ENCODE measurements at regions of chr11 and their contacts with region 1.

Region 1: DNA sequence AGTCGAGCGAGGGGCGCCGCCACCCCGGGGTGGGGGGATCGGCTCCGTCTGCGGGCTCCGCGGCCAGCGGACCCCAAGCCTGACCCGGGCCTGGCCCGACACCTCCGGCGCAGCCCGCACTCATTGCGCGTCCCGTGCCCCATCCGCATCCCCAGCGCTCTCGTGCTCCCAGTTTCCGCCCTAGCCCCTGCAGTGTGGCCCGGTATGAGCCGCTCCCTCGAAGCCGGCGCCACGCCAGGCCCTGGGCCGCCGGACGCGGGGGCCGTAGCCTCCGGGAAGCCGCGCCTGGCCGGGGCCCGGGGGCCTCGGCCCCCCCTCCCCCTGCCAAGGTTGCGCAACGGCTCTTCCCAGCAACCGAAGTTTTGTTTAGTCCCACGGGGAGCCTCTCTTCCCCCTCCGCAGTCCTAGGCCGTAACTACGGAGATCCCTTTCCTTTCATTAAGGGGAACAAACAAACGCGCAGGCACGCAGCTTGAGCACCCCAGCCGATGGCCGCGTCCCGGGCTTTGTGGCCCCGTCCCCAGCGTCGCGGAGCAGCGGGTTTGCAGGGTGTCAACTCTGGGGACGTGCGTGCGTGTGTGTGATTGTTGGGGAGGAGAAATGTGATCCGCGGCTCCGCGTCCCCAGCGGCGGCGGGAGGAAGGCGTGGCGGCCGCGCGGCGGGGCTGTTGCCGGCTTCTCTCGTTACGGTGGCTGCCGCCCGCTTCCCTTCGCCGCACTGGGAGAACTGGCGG is 883 bp downstream of the HIPK3 start:
- DNase-seq: peak; percentile 92 to 96
- ATAC-seq: peak; percentile 94
- H3K4me3 ChIP-seq: peak overlapping the region; percentile 95 to 96
- H3K27ac ChIP-seq: peak overlapping the region; percentile 99 to 100
- H3K4me1 ChIP-seq: peaks cover 2 to 3% of the 10 kb centered on the region in 2 donors
- H3K27me3 ChIP-seq: no peaks in the 10 kb centered on the region

Region 2: DNA sequence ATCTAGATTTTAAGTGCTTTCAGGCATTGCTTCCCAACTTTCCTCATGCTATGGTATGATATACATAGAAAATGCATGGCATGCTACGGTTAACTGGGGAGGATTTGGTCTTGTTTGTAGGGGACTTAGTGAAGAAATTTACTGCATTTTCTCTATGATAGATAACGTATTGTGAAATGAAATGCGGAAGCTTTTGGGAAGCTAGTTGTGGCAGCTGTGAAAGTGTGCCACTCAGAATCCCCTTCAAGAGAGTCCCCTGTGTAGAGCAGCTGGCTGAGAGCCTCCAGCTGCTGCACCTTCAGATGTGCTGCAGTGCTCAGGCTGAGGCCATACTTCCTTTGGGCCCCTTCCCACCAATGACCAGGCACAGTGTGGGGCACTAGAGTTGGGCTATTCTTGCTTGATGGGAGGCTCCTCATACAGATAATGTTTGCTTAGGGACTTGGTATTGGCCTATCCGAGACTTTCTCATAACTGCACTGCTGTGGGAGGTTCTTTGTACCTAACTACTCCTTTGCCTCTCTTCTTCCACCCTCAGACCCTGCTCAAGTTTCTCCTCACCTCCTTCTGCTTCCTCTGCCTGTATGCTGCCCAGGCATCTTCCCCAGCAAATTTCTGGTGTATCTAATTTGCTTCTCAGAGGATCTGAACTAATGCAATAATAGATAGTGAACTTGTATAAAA is 66.4 kb after region 1 on chr11:
- intact Hi-C with region 1: loop called in 1 of 2 experiments (anchors 5 kb)
- DNase-seq: no peak
- ATAC-seq: no peak
- H3K4me3 ChIP-seq: no peak overlapping the region
- H3K27ac ChIP-seq: no peak overlapping the region
- H3K4me1 ChIP-seq: peaks cover 5 to 12% of the 10 kb centered on the region in 2 donors
- H3K27me3 ChIP-seq: no peaks in the 10 kb centered on the region

Region 3: DNA sequence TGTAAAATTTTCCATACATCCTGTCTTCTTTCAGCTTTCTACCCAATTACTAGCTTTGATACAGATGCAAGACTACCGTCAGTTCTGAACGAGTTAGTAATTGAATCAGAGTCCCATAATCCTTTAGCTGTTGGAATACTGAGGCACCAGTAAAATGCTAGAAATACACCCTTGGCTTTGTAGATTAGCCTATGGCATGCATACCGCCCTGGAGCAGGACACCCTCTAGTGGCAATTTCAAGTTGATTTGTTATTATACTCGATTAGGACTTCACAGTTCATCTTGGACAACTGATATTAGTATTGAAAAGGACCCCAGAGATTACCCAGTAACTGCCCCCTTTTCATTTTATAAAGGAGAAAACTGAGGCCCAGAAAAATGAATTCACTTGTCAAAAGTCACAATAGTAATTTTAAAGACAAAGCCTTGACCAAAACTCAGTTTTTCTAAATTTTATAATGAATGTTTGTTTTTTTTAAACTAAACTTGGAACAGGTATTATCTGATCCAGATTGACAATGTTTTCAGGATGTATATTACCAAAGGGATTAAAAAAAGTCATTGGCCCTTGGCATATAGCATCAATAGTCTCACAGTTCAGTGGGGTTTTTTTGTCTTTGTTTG is 71.8 kb after region 1 on chr11:
- intact Hi-C with region 1: loop called in 1 of 2 experiments (anchors 5 kb)
- DNase-seq: no peak
- ATAC-seq: peak; percentile 65
- H3K4me3 ChIP-seq: no peak overlapping the region
- H3K27ac ChIP-seq: no peak overlapping the region
- H3K4me1 ChIP-seq: peaks cover 0 to 9% of the 10 kb centered on the region in 2 donors
- H3K27me3 ChIP-seq: no peaks in the 10 kb centered on the region

Region 4: DNA sequence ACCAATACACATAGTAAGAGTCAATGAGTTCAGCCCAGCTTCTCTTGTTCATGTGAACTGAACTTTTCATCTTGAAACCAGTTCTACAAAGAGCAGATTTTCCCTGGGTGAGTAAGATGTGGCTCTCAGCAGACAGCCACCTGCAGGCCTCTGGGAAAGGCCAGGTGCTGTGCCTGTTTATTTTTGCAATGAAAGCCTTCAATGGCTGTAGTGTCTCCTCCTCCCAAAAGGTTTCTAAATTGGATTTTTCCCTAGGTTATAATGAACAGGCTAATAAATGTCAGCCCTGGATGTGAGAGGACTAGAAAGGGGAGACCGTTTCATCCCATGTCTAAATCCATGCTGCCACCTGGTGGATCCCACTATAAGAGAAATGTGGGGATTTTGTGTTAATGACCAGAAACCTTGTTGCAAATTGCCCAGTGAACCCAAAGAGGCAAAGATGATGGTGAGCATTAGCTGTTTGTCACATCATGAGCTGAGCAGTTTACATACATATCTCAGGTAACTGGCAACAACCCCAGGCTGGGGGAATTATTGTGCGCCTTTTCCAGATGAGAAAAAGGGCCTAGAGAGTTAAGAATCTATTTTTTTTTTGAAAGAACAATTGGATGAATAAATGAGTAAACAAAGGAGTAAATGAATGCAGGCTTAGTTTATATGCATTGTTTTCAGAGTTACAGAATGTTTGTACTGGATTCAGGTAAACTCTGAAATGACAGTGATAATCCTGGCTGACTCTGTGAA is 429.8 kb after region 1 on chr11:
- intact Hi-C with region 1: loop called (anchors 5 to 10 kb)
- DNase-seq: no peak
- ATAC-seq: no peak
- H3K4me3 ChIP-seq: no peak overlapping the region
- H3K27ac ChIP-seq: no peak overlapping the region
- H3K4me1 ChIP-seq: peaks cover 0 to 3% of the 10 kb centered on the region in 2 donors
- H3K27me3 ChIP-seq: no peaks in the 10 kb centered on the region

Measured in aorta (tissue), 5 donors.